Mammary epithelial cell (primary cell): ENCODE measurements at regions of chr3 and their contacts with region 1.

Region 1: DNA sequence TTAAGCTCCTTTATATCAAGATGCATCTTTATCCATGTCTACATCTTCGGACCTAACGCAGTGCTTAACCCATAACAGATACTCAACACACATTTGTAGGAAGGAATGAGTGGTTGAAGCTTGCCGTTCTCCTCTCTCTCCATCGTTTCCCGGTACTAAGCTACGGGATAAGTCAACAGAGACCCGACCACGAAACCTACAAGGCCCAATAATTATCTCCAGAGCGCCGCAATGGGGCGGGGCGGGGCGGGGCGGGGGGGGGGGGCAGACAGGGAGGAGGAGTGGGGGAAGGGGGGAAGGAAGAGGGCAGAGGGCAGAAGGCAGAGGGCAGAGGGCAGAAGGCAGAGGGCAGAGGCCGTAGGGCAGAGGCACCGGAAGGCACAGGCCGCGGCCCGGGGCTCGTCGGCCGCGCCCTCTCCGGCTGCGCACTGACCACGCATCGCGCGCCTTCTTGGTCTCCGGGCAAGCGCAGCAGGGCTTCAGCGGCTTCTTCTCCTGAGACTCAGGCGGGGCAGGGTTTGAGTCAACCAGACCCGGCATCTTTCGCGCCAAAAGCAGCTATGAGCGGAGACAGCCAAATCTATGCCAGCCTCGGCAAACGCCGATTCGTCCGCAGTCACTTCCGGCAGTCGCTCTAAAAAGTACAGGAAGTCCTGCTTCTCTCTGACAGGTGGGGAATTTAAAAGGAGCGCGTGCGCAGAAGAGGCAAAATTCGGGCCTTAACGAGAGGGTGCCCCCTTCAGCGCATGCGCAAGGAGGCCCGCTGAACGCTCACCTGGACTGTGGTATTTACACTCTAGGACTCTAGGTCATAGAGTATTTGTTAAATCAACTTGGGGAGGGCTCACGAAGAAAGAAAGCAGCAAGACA is at the start of gene COX17:
- DNase-seq: peak; percentile 96
- H3K4me3 ChIP-seq: peak within 1 kb of the TSS; percentile 74 to 81 (median 78)
- H3K27ac ChIP-seq: peak within 1 kb of the TSS; percentile 75
- H3K4me1 ChIP-seq: peaks cover 14% of the 10 kb centered on the region
- H3K27me3 ChIP-seq: no peaks in the 10 kb centered on the region
- CTCF ChIP-seq: no peak
- total RNA-seq, gene COX17: 11.3 to 41.1 TPM

Region 2: GRCh38 chr3:119145500-119146191 is 531.4 kb before region 1 on chr3 and contains the start of gene TEX55:
- CTCF ChIA-PET with region 1: no interaction called
- dilution Hi-C with region 1: no loop called
- in situ Hi-C with region 1: loop called in 1 of 2 experiments (anchors 25 kb)
- intact Hi-C with region 1: no loop called
- DNase-seq: peak; percentile 66
- H3K4me3 ChIP-seq: no peak within 1 kb of the TSS
- H3K27ac ChIP-seq: no peak within 1 kb of the TSS
- H3K4me1 ChIP-seq: peaks cover 15% of the 10 kb centered on the region
- H3K27me3 ChIP-seq: no peaks in the 10 kb centered on the region
- CTCF ChIP-seq: peak; percentile 83 to 88
- total RNA-seq, gene TEX55: not detected

Region 3: GRCh38 chr3:119279101-119279554 is 397.9 kb before region 1 on chr3:
- CTCF ChIA-PET with region 1: no interaction called
- dilution Hi-C with region 1: no loop called
- in situ Hi-C with region 1: loop called in 1 of 2 experiments (anchors 25 kb)
- intact Hi-C with region 1: loop called (anchors 1 kb)
- DNase-seq: no peak
- H3K4me3 ChIP-seq: no peak overlapping the region
- H3K27ac ChIP-seq: no peak overlapping the region
- H3K4me1 ChIP-seq: no peaks in the 10 kb centered on the region
- H3K27me3 ChIP-seq: peaks cover 2% of the 10 kb centered on the region
- CTCF ChIP-seq: no peak

Region 4: GRCh38 chr3:119457246-119457645 is 219.8 kb before region 1 on chr3:
- CTCF ChIA-PET with region 1: no interaction called
- dilution Hi-C with region 1: no loop called
- in situ Hi-C with region 1: no loop called
- intact Hi-C with region 1: no loop called
- DNase-seq: no peak
- H3K4me3 ChIP-seq: no peak overlapping the region
- H3K27ac ChIP-seq: no peak overlapping the region
- H3K4me1 ChIP-seq: peaks cover 8% of the 10 kb centered on the region
- H3K27me3 ChIP-seq: no peaks in the 10 kb centered on the region
- CTCF ChIP-seq: no peak

Region 5: GRCh38 chr3:119508172-119508845 is 168.7 kb before region 1 on chr3:
- CTCF ChIA-PET with region 1: no interaction called
- dilution Hi-C with region 1: no loop called
- in situ Hi-C with region 1: loop called (anchors 10 to 25 kb)
- intact Hi-C with region 1: no loop called
- DNase-seq: peak; percentile 6
- H3K4me3 ChIP-seq: no peak overlapping the region
- H3K27ac ChIP-seq: no peak overlapping the region
- H3K4me1 ChIP-seq: no peaks in the 10 kb centered on the region
- H3K27me3 ChIP-seq: no peaks in the 10 kb centered on the region
- CTCF ChIP-seq: no peak

Region 6: GRCh38 chr3:119580166-119580760 is 96.7 kb before region 1 on chr3:
- CTCF ChIA-PET with region 1: no interaction called
- dilution Hi-C with region 1: no loop called
- in situ Hi-C with region 1: no loop called
- intact Hi-C with region 1: no loop called
- DNase-seq: no peak
- H3K4me3 ChIP-seq: peak overlapping the region; percentile 49 to 58 (median 57)
- H3K27ac ChIP-seq: peak overlapping the region; percentile 41
- H3K4me1 ChIP-seq: peaks cover 6% of the 10 kb centered on the region
- H3K27me3 ChIP-seq: no peaks in the 10 kb centered on the region
- CTCF ChIP-seq: no peak

Region 7: GRCh38 chr3:119618905-119619493 is 58.0 kb before region 1 on chr3:
- CTCF ChIA-PET with region 1: no interaction called
- dilution Hi-C with region 1: no loop called
- in situ Hi-C with region 1: no loop called
- intact Hi-C with region 1: loop called (anchors 1 kb)
- DNase-seq: no peak
- H3K4me3 ChIP-seq: no peak overlapping the region
- H3K27ac ChIP-seq: no peak overlapping the region
- H3K4me1 ChIP-seq: no peaks in the 10 kb centered on the region
- H3K27me3 ChIP-seq: no peaks in the 10 kb centered on the region
- CTCF ChIP-seq: peak in 1 of 2 donors; percentile 21